ENCODE measurements at regions of chr3 and their contacts with region 1.

Region 1: DNA sequence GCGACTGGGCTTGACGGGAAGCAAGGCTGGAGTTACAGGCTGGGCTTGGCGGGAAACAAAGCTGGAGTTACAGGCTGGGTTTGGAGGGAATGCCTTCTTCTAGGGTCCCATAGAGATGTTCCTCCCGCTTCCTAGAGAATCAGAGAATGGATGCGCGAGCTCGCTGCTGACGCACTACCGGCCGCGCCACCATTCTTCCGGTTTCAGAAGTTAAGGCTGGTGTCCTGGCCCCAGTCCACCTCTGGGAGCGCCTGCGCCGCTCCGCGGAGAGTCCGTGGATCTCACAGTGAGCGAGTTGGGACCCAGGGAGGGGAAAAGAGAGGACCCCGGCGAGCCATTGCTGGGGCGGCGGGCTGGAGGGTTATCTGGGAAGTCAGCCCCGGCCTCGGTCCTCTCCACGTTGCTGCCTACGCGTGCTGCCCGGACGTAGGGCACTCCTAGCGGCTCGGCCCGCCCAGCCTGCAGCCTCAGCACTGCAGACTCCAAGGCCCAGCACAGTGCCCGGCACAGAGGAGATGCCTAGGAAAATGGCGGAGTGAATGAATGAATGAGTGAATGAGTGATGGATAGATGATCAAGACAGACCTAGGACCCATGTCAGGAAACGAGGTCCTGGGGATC is at the start of gene ZNF502:
- DNase-seq: peak; percentile 60 to 78
- ATAC-seq: peak; percentile 75 to 96
- H3K4me3 ChIP-seq: peak within 1 kb of the TSS; percentile 68 to 90 (median 88)
- H3K27ac ChIP-seq: peak within 1 kb of the TSS; percentile 60 to 70 (median 66)
- H3K4me1 ChIP-seq: peaks cover 0 to 4% of the 10 kb centered on the region in 2 donors
- H3K27me3 ChIP-seq: peaks cover 0 to 3% (median 0%) of the 10 kb centered on the region in 3 donors
- CTCF ChIP-seq: peak in 3 of 5 experiments; percentile 31 to 45 (median 42)
- POLR2A ChIP-seq: peak in 1 of 2 donors; percentile 34
- total RNA-seq, gene ZNF502: 1.8 to 4.8 (median 1.9) TPM

Region 2: DNA sequence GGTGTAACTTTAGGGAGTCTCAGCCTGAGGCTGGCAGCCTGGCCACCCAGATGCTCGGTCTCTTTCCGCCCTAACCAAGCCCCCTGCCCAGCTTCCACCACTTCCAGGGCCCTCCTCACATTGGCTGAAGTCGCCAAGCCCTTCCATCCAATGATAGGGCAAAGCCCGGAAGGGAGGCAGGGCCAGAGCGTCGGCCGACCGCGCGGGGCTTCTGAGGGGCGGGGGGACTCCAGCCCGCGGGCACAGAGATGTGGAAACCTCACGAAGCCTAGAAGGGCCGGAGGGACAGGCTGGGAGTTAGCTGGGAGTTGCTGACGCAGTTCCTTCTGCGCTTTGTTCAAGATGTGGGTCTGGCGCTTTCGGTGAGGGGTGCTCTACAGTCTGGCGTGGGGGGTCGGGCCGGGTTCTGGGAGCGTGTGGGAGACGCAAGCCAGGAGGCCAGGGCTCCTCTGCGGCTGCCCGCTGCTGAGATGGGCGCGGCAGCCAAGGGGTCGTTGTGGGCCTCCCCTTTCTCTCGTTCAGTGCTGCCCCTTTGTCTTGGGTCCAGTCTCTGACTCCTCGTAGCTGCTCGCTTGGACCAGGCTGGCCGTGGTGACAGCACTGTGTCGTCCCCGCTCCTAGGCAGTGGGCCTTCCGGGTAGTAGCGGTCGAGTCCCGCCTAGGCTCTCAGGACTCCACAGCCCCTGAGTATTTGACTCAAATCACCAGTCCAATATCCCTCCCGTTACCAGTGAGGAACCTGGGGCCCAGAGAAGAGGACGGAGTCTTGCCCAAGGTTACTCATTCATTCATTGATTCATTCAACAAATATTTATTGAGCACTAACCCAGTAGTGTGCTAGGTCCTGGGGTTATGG is 127.7 kb before region 1 on chr3 and contains the start of gene ZNF660:
- in situ Hi-C with region 1: no loop called
- intact Hi-C with region 1: no loop called
- DNase-seq: peak; percentile 3 to 15
- ATAC-seq: peak; percentile 54 to 56
- H3K4me3 ChIP-seq: peak within 1 kb of the TSS; percentile 61 to 73 (median 66)
- H3K27ac ChIP-seq: peak within 1 kb of the TSS; percentile 36 to 61 (median 49)
- H3K4me1 ChIP-seq: peaks cover 5 to 10% of the 10 kb centered on the region in 2 donors
- H3K27me3 ChIP-seq: no peaks in the 10 kb centered on the region
- CTCF ChIP-seq: no peak
- POLR2A ChIP-seq: no peak
- total RNA-seq, gene ZNF660: 0.13 to 0.39 (median 0.28) TPM

Region 3: GRCh38 chr3:44729384-44729910 is 16.9 kb after region 1 on chr3 and contains the start of gene ZNF501:
- in situ Hi-C with region 1: no loop called
- intact Hi-C with region 1: loop called (anchors 1 kb)
- DNase-seq: peak; percentile 88 to 92
- ATAC-seq: peak; percentile 98 to 100
- H3K4me3 ChIP-seq: peak within 1 kb of the TSS; percentile 71 to 90 (median 82)
- H3K27ac ChIP-seq: peak within 1 kb of the TSS; percentile 55 to 76 (median 65)
- H3K4me1 ChIP-seq: peaks cover 9 to 13% of the 10 kb centered on the region in 2 donors
- H3K27me3 ChIP-seq: no peaks in the 10 kb centered on the region
- CTCF ChIP-seq: no peak
- POLR2A ChIP-seq: peak in 1 of 2 donors; percentile 32
- total RNA-seq, gene ZNF501: 0.92 to 4.7 (median 1.4) TPM

Region 4: DNA sequence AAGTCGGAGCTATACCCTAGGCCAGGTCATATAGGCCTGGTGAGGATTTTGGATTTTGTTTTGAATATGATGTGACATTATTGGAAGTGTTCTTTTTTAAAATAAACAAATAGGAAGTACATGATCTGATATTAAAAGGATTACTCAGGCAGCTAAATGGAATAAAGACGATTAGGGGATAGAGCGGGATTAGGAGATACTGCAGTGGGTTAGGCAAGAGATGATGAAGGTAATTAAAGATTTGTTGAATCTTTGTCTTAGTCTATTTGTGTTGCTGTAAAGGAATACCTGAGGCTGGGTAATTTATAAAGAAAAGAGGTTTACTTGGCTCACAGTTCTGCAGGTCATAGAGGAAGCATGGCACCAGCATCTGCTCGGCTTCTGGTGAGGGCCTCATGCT is 70.3 kb after region 1 on chr3:
- in situ Hi-C with region 1: no loop called
- intact Hi-C with region 1: no loop called
- DNase-seq: no peak
- ATAC-seq: no peak
- H3K4me3 ChIP-seq: no peak overlapping the region
- H3K27ac ChIP-seq: no peak overlapping the region
- H3K4me1 ChIP-seq: no peaks in the 10 kb centered on the region
- H3K27me3 ChIP-seq: no peaks in the 10 kb centered on the region
- CTCF ChIP-seq: no peak
- POLR2A ChIP-seq: no peak

Region 5: GRCh38 chr3:44825264-44825925 is 112.8 kb after region 1 on chr3:
- in situ Hi-C with region 1: no loop called
- intact Hi-C with region 1: no loop called
- DNase-seq: no peak
- ATAC-seq: no peak
- H3K4me3 ChIP-seq: no peak overlapping the region
- H3K27ac ChIP-seq: no peak overlapping the region
- H3K4me1 ChIP-seq: no peaks in the 10 kb centered on the region
- H3K27me3 ChIP-seq: no peaks in the 10 kb centered on the region
- CTCF ChIP-seq: no peak
- POLR2A ChIP-seq: no peak

Region 6: GRCh38 chr3:44861412-44862220 is 149.1 kb after region 1 on chr3 and contains the start of gene TMEM42:
- in situ Hi-C with region 1: no loop called
- intact Hi-C with region 1: loop called (anchors 5 kb)
- DNase-seq: peak; percentile 77 to 85
- ATAC-seq: peak; percentile 96 to 97
- H3K4me3 ChIP-seq: peak within 1 kb of the TSS; percentile 70 to 92 (median 81)
- H3K27ac ChIP-seq: peak within 1 kb of the TSS; percentile 84 to 97 (median 90)
- H3K4me1 ChIP-seq: peaks cover 11 to 17% of the 10 kb centered on the region in 2 donors
- H3K27me3 ChIP-seq: no peaks in the 10 kb centered on the region
- CTCF ChIP-seq: no peak
- POLR2A ChIP-seq: peak; percentile 84
- total RNA-seq, gene TMEM42: 7.2 to 19.7 (median 14.9) TPM

Measured in gastrocnemius medialis (tissue), 4 donors.